Activated CD4-positive, alpha-beta T cell treated with anti-CD3 and anti-CD28 coated beads for 36 hours (primary cell): ENCODE measurements at regions of chr5 and their contacts with region 1.

Region 1: DNA sequence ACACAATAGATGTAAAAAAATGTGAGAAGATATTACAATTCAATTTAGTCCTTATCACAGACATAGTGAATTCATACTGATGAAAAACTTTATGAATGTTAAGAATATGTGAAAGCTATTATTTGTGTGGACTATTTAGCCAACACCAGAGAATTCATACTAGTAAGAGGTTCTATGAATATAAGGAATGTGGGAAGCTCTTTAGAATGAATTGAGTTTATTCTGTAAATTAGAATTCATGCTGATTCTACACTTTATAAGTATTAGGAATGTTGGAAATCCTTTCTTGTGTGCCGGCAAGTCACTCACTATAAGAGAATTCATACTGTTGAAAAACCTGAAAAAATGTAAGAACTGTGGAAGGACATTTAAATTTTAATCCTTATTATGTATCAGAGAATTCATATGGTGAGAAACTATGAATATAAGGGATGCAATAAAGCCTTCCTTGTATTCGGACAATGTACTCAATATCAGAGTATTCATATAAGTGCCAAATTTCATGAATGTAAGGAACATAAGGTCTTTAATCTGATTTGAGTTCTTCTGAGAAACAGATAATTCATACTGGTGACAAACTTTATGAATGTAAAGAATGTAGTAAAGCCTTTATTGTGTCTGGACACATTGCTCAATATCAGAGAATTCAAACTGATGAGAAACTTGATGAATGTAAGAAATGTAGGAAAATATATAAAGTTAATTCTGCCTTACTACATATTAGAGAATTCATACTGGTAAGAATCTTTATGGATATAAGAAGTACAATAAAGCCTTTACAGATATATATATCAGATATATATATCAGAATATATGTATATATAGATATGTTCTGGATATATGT is 21.5 kb upstream of the PCDHA1 start:
- DNase-seq: no peak
- ATAC-seq: no peak
- H3K4me3 Mint-ChIP-seq: no peak overlapping the region
- H3K27ac Mint-ChIP-seq: no peak overlapping the region
- H3K4me1 Mint-ChIP-seq: no peaks in the 10 kb centered on the region
- H3K27me3 Mint-ChIP-seq: no peaks in the 10 kb centered on the region

Region 2: GRCh38 chr5:139446956-139447779 is 1317.2 kb before region 1 on chr5:
- CTCF ChIA-PET with region 1: no interaction called
- POLR2A ChIA-PET with region 1: no interaction called
- intact Hi-C with region 1: no loop called
- DNase-seq: peak; percentile 68
- ATAC-seq: peak; percentile 77
- H3K4me3 Mint-ChIP-seq: peak overlapping the region; percentile 1
- H3K27ac Mint-ChIP-seq: peak overlapping the region; percentile 92
- H3K4me1 Mint-ChIP-seq: peaks cover 66% of the 10 kb centered on the region
- H3K27me3 Mint-ChIP-seq: no peaks in the 10 kb centered on the region

Region 3: GRCh38 chr5:141260458-141261237 is 496.2 kb after region 1 on chr5:
- CTCF ChIA-PET with region 1: no interaction called
- POLR2A ChIA-PET with region 1: no interaction called
- intact Hi-C with region 1: loop called in 1 of 2 experiments (anchors 10 kb)
- DNase-seq: no peak
- ATAC-seq: no peak
- H3K4me3 Mint-ChIP-seq: no peak overlapping the region
- H3K27ac Mint-ChIP-seq: no peak overlapping the region
- H3K4me1 Mint-ChIP-seq: no peaks in the 10 kb centered on the region
- H3K27me3 Mint-ChIP-seq: no peaks in the 10 kb centered on the region

Region 4: DNA sequence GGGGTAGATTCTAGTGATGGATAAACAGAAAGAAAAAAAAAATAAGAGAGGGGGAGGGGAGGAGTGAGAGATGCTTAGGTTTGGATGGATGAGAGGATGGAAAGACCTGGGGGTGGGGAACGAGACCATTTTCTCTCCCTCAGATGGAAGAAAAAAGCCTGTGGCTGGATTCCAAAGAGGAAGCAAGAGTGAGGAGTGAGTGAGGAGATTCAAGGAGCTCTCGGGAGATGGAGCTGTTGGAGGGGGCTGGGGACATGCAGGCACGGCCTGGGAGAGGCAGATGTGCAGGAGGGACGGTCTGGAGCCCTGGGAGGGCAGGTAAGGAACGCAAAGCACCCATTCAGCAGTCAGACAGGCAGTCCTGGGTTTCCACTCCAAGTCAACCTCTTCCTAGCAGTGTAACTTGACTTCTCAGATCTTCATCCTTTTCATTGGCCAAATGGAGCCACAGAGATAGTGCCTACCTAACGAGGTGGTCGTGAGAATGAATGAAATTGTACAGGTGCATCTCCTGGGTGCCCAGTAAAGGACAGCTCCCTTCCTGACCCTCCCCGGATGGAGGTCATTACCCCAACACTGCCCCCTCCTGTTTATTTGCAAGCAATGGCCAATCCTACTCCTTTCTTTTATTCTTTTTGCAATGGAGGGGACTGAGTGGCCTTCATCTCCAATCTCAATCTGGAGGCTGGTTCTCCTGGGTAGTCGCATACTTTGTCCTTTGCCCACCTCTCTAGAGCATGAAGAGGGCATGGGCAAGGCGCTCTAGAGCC is 1061.6 kb after region 1 on chr5:
- CTCF ChIA-PET with region 1: no interaction called
- POLR2A ChIA-PET with region 1: no interaction called
- intact Hi-C with region 1: no loop called
- DNase-seq: peak; percentile 24
- ATAC-seq: peak; percentile 55
- H3K4me3 Mint-ChIP-seq: no peak overlapping the region
- H3K27ac Mint-ChIP-seq: no peak overlapping the region
- H3K4me1 Mint-ChIP-seq: no peaks in the 10 kb centered on the region
- H3K27me3 Mint-ChIP-seq: peaks cover 4% of the 10 kb centered on the region